Activated CD4-positive, alpha-beta memory T cell treated with anti-CD3 and anti-CD28 coated beads for 36 hours (primary cell): ENCODE measurements at regions of chr1 and their contacts with region 1.

Region 1: GRCh38 chr1:28648474-28649198 is at the start of gene RNU11:
- DNase-seq: peak; percentile 91
- H3K4me3 Mint-ChIP-seq: peak within 1 kb of the TSS; percentile 93
- H3K27ac Mint-ChIP-seq: peak within 1 kb of the TSS; percentile 99
- H3K4me1 Mint-ChIP-seq: peaks cover 27% of the 10 kb centered on the region
- H3K27me3 Mint-ChIP-seq: no peaks in the 10 kb centered on the region
- total RNA-seq, gene RNU11: not detected

Region 2: DNA sequence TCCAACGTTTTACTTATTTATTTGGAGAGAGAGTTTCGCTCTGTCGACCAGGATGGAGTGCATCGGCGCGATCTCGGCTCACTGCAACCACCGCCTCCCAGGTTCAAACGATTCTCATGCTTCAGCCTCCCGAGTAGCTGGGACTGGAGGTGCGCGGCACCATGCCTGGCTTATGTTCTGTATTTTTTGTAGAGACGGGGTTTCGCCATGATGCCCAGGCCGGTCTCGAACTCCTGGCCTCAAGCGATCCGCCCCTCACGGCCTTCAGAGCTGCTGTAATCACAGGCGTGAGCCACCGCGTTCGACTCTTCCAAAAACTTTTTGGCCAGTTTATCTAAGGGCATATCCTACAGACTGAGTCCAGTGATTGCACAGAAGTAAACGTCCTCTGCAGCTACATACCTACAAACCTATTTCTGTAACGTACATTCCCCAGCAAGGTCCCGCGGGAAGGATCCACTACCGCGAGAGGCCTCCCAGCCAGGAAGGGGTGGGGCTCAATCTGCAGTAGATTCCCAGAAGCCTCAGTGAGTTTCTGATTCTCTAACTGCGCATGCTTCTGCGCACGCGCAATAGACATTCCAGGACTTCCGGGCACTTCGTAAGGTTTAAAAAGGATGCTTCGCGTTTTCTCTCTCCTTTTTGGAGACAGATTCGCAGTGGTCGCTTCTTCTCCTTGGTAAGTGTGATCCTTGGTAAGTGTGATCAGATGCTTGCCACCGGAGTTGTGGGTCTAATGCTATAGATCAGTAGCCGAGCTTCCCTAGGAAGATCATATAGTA is 143.0 kb before region 1 on chr1 and contains the start of gene RCC1:
- CTCF ChIA-PET with region 1: no interaction called
- POLR2A ChIA-PET with region 1: interaction called, 18 read pairs
- intact Hi-C with region 1: no loop called
- DNase-seq: peak; percentile 98
- H3K4me3 Mint-ChIP-seq: peak within 1 kb of the TSS; percentile 97
- H3K27ac Mint-ChIP-seq: peak within 1 kb of the TSS; percentile 97
- H3K4me1 Mint-ChIP-seq: peaks cover 38% of the 10 kb centered on the region
- H3K27me3 Mint-ChIP-seq: peaks cover 6% of the 10 kb centered on the region
- total RNA-seq, gene RCC1: 83.5 to 86.1 TPM

Region 3: GRCh38 chr1:28552758-28553663 is 95.6 kb before region 1 on chr1 and contains the start of gene TRNAU1AP:
- CTCF ChIA-PET with region 1: no interaction called
- POLR2A ChIA-PET with region 1: interaction called, 14 read pairs
- intact Hi-C with region 1: loop called (anchors 10 kb)
- DNase-seq: peak; percentile 99
- H3K4me3 Mint-ChIP-seq: peak within 1 kb of the TSS; percentile 98
- H3K27ac Mint-ChIP-seq: peak within 1 kb of the TSS; percentile 96
- H3K4me1 Mint-ChIP-seq: peaks cover 17% of the 10 kb centered on the region
- H3K27me3 Mint-ChIP-seq: no peaks in the 10 kb centered on the region
- total RNA-seq, gene TRNAU1AP: 57.3 to 59.6 TPM

Region 4: DNA sequence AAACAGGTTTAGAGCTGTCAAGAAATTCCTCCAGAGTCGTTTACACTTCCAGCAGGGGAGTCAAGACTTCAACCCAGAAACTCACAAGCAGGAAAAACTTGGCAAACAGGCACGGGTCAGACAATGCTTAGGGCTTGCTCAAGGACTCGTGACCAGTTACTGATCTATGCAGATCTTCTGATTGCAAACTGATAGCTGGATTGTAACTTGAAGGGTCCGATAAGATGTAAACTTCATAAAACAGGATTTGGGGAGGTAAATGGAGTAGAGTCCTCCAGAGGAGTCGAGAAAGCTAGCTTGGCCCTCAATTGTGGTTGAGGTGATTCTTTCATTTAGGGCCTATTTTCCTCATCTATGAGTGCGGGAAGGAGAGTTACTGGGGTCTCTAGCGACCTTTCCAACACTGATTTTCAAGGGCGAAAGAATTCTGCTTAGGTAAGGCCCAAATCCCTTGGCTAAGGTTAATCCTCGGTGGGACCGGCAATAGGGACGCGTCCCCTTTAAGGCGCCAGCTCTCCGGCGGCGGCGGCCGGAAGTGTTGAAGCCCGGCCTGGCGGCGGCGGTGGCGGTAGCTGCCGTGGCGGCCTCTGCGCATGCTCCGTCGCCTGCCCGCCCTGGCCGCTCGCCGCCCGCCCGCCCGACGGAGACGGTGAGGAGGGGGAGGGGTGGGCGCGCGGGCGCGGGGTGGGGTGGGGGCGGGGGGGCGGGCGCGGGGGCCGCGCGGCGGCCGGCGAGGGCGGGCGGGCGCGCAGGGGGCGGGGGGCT is 19.7 kb after region 1 on chr1 and contains the start of gene GMEB1:
- CTCF ChIA-PET with region 1: interaction called, 7 read pairs
- POLR2A ChIA-PET with region 1: interaction called, 120 read pairs
- intact Hi-C with region 1: loop called (anchors 1 kb)
- DNase-seq: peak; percentile 91
- H3K4me3 Mint-ChIP-seq: peak within 1 kb of the TSS; percentile 95
- H3K27ac Mint-ChIP-seq: peak within 1 kb of the TSS; percentile 99
- H3K4me1 Mint-ChIP-seq: peaks cover 12% of the 10 kb centered on the region
- H3K27me3 Mint-ChIP-seq: no peaks in the 10 kb centered on the region
- total RNA-seq, gene GMEB1: 21.4 to 22.6 TPM